ENCODE measurements at regions of chr5 and their contacts with region 1.

Region 1: DNA sequence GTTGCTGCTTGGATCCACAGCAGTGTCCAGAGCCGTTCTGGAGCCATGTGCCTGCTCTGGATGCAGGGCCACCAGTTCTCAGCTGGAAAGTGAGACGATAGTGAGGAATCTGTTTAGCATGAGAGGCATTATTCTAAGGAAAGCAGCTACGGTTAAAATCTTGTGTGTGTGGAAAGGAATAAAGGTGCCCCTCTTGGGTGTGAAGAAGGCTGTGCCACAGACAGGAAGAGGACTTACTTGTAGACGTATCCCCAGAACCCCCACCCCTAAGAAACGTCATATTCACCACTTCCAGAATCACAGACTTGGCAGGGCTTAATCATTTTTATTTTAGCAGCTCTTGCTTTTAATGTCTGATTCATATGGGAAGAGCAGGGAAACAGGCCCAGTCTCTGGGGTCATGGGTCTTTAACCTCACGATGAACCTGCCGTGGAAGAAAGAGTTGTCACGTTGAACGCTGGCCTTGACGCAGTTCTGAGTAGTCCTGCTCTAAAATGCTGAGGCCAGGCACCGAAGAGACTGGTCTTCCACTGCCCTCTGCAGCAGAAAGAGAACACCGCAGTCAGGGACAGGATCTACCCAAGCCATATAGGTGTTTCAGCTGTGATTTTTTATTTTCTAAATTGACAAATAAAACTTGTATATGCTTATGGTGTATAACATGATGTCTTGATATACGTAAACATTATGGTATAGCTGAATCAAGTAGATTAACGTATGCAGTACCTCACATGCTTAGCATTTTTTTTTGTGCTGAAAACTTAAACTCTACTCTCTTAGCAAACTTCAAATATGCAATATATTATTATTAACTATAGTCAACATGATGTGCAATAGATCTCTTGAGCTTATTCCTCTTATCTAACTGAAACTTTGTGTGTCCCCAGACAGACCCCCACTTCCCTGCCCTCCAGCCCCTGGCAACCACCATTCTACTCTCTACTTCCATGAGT is 38.8 kb downstream of the CARTPT start:
- DNase-seq: peak; percentile 87 to 97 (median 94)
- H3K4me3 ChIP-seq: no peak overlapping the region
- H3K27ac ChIP-seq: peak overlapping the region in 4 of 5 donors; percentile 62 to 80 (median 68)
- H3K4me1 ChIP-seq: peaks cover 5 to 6% of the 10 kb centered on the region in 2 donors
- H3K27me3 ChIP-seq: no peaks in the 10 kb centered on the region
- CTCF ChIP-seq: peak; percentile 68 to 97 (median 92)
- POLR2A ChIP-seq: no peak

Region 2: DNA sequence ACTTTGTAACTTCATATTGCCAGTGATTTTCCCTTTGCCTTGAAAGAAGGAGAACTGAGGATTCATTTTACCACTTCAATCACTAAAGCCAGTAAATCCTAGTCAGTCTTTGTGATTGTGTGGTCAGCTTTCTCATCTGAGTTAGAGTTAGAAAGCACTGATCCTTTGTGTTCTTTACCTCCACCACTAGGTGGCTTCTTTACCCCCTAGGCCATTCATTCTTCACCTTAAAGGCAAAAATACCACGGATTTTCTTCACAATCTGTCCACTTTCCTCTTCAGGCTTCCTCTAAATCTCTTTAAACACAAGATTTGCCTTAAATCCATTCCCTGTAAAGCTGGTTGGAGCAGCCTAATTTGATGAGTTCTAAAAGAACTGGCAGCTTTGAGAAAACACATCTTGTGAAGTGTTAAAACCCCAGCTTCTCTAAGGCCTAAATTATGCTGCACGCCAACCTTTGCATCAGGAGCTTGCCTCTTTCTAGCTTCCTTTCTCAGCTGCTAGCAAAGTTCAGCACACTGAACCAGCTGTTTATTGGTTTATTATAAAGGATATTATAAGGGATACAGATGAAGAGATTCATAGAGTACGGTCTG is 282.0 kb before region 1 on chr5:
- intact Hi-C with region 1: loop called (anchors 10 kb)
- DNase-seq: no peak
- H3K4me3 ChIP-seq: no peak overlapping the region
- H3K27ac ChIP-seq: peak overlapping the region in 1 of 5 donors; percentile 18
- H3K4me1 ChIP-seq: peaks cover 6 to 8% of the 10 kb centered on the region in 2 donors
- H3K27me3 ChIP-seq: no peaks in the 10 kb centered on the region
- CTCF ChIP-seq: peak; percentile 60 to 69 (median 62)
- POLR2A ChIP-seq: no peak

Region 3: GRCh38 chr5:71482132-71482531 is 275.7 kb before region 1 on chr5:
- intact Hi-C with region 1: loop called (anchors 10 kb)
- DNase-seq: peak; percentile 58 to 81 (median 73)
- H3K4me3 ChIP-seq: no peak overlapping the region
- H3K27ac ChIP-seq: peak overlapping the region in 4 of 5 donors; percentile 35 to 59 (median 49)
- H3K4me1 ChIP-seq: peaks cover 17 to 27% of the 10 kb centered on the region in 2 donors
- H3K27me3 ChIP-seq: no peaks in the 10 kb centered on the region
- CTCF ChIP-seq: no peak
- POLR2A ChIP-seq: no peak

Region 4: GRCh38 chr5:71615809-71616208 is 142.1 kb before region 1 on chr5:
- intact Hi-C with region 1: no loop called
- DNase-seq: no peak
- H3K4me3 ChIP-seq: no peak overlapping the region
- H3K27ac ChIP-seq: no peak overlapping the region
- H3K4me1 ChIP-seq: no peaks in the 10 kb centered on the region
- H3K27me3 ChIP-seq: no peaks in the 10 kb centered on the region
- CTCF ChIP-seq: no peak
- POLR2A ChIP-seq: no peak

Region 5: GRCh38 chr5:71810023-71810422 is 52.2 kb after region 1 on chr5:
- intact Hi-C with region 1: no loop called
- DNase-seq: no peak
- H3K4me3 ChIP-seq: no peak overlapping the region
- H3K27ac ChIP-seq: no peak overlapping the region
- H3K4me1 ChIP-seq: peaks cover 0 to 6% of the 10 kb centered on the region in 2 donors
- H3K27me3 ChIP-seq: no peaks in the 10 kb centered on the region
- CTCF ChIP-seq: no peak
- POLR2A ChIP-seq: no peak